Calu3 (cell line): ENCODE measurements at regions of chr2 and their contacts with region 1.

Region 1: GRCh38 chr2:41414486-41415230 is 633.2 kb upstream of the PKDCC start:
- DNase-seq: peak; percentile 16
- H3K4me3 Mint-ChIP-seq: no peak overlapping the region
- H3K27ac Mint-ChIP-seq: no peak overlapping the region
- H3K4me1 Mint-ChIP-seq: no peaks in the 10 kb centered on the region
- H3K27me3 Mint-ChIP-seq: no peaks in the 10 kb centered on the region
- CTCF ChIP-seq: peak; percentile 44

Region 2: GRCh38 chr2:41441627-41442357 is 27.1 kb after region 1 on chr2:
- CTCF ChIA-PET with region 1: no interaction called
- intact Hi-C with region 1: no loop called
- DNase-seq: no peak
- H3K4me3 Mint-ChIP-seq: no peak overlapping the region
- H3K27ac Mint-ChIP-seq: no peak overlapping the region
- H3K4me1 Mint-ChIP-seq: no peaks in the 10 kb centered on the region
- H3K27me3 Mint-ChIP-seq: no peaks in the 10 kb centered on the region
- CTCF ChIP-seq: no peak

Region 3: GRCh38 chr2:41698678-41699422 is 284.2 kb after region 1 on chr2:
- CTCF ChIA-PET with region 1: interaction called, 8 read pairs
- intact Hi-C with region 1: loop called (anchors 1 kb)
- DNase-seq: peak; percentile 39
- H3K4me3 Mint-ChIP-seq: no peak overlapping the region
- H3K27ac Mint-ChIP-seq: no peak overlapping the region
- H3K4me1 Mint-ChIP-seq: no peaks in the 10 kb centered on the region
- H3K27me3 Mint-ChIP-seq: peaks cover 21% of the 10 kb centered on the region
- CTCF ChIP-seq: peak; percentile 69

Region 4: DNA sequence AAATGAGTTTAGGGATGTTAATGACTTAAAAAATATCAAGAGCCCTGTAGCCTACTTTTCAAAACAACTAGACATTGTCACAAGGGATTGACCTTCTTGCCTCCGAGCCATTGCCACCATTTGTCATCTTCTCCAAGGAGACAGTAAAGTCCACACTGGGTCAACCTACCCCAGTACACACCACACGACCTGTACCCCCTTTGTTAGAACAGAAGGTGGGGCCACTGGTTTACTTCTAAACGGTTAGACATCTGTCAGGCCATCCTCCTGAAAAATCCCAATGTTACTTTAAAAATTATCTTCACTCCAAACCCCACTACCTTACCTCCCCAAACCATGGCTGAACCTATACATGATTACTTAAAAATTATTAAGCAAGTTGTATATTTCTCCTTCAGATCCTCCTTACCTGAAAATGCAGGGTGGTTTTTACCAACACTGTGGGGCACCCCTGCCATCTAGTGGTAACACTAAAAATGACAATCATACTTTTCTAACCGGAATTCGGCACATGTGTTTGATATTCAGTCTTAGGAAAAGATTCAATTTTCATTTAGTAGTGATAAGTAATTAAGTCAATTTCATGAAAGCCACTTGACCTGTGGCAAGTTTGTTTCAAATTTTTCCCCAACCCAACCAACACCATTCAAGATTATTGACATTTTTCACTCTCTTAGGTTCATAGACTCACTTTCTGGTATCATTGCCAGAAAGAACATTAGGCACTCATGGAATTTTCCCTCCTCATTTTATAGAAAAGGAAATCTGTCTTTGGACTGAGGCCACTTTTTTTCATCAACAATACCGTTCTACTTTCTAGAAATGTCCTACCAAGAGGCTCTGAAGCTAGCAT is 367.9 kb after region 1 on chr2:
- CTCF ChIA-PET with region 1: interaction called, 5 read pairs
- intact Hi-C with region 1: loop called (anchors 1 kb)
- DNase-seq: peak; percentile 46
- H3K4me3 Mint-ChIP-seq: no peak overlapping the region
- H3K27ac Mint-ChIP-seq: no peak overlapping the region
- H3K4me1 Mint-ChIP-seq: peaks cover 8% of the 10 kb centered on the region
- H3K27me3 Mint-ChIP-seq: peaks cover 30% of the 10 kb centered on the region
- CTCF ChIP-seq: peak; percentile 46

Region 5: DNA sequence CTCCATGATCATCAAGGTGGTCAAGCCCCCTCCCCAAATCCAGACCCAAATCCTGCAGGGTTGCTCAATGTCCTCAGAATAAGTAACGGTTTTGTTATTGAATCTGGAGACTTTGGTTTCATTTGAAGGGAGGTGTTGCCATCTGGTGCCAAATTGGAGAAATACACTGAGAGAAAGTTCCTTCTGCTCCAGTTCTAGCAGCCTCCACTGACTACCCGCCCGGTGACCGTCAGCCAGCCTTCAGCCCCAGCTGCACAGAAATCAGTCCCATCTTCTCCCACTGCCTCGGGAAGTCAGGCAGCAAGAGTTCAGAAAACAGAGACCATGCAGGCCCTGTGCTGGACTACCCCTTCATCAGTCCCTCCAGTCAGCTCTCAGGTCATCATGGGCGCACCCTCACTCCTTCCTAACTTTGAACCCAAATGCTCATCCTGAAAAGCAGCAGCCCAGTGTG is 671.9 kb after region 1 on chr2:
- CTCF ChIA-PET with region 1: no interaction called
- intact Hi-C with region 1: loop called (anchors 10 kb)
- DNase-seq: peak; percentile 60
- H3K4me3 Mint-ChIP-seq: no peak overlapping the region
- H3K27ac Mint-ChIP-seq: no peak overlapping the region
- H3K4me1 Mint-ChIP-seq: peaks cover 9% of the 10 kb centered on the region
- H3K27me3 Mint-ChIP-seq: no peaks in the 10 kb centered on the region
- CTCF ChIP-seq: peak; percentile 76